CD8-positive, alpha-beta T cell (primary cell): ENCODE measurements at regions of chr15 and their contacts with region 1.

Region 1: GRCh38 chr15:40694688-40695468 is at the start of gene RAD51:
- DNase-seq: peak; percentile 82 to 96 (median 94)
- ATAC-seq: peak; percentile 94
- H3K4me3 ChIP-seq: peak within 1 kb of the TSS; percentile 84 to 94
- H3K4me3 Mint-ChIP-seq: peak within 1 kb of the TSS; percentile 99
- H3K27ac ChIP-seq: peak within 1 kb of the TSS; percentile 83 to 98
- H3K27ac Mint-ChIP-seq: peak within 1 kb of the TSS; percentile 99
- H3K4me1 ChIP-seq: peaks cover 12% of the 10 kb centered on the region
- H3K4me1 Mint-ChIP-seq: peaks cover 27% of the 10 kb centered on the region
- H3K27me3 ChIP-seq: no peaks in the 10 kb centered on the region
- H3K27me3 Mint-ChIP-seq: no peaks in the 10 kb centered on the region
- CTCF ChIP-seq: no peak
- total RNA-seq, gene RAD51: 1.3 to 1.5 TPM

Region 2: DNA sequence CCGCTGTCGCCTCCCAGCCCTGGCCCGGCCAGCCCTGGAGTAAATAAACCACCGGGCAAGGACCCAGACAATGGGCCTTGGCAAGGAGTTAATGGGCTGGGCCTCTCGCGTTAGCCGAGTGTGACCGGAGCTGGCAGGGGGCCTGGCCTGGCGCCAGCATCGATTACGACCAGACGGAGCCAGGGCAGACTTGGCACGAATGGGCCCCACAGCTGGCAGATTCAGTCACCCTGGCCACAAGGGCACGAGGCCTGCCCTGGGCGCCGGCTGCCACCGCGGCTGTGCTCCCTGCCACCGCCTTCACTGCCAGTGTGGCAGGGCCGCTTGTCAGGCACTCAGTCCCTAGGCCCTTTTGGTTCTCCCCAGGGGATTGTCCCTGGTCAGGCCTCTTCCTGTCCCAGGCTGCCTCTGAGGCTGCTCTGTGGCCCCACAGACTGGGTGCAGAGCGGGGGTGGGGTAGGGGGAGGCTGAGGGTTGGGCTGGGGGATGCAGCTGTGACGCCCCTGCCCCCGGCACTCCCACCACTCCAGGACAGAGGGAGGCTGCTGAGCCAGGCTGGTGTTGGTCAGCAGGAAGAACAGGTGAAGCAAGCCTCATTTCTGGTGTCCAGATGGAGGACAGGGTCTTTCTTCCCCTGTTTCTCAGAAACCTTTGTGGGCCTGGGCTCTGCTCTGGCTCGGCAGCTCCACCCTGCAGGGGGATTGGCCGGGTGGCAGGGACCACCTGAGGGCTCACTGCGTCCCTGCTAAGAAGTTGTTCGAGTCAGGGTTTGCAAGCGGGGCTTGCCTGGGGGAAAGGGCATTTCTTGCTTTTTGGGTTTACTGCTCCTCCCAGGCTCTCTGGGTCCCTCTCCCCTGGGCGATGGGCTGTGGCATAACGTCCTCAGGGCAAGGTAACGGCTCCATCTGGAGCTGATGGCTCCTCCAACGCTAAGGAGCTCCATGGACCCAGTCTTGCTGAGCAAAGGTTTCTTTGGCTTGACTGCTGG is 625.4 kb before region 1 on chr15:
- CTCF ChIA-PET with region 1: no interaction called
- POLR2A ChIA-PET with region 1: no interaction called
- intact Hi-C with region 1: no loop called
- DNase-seq: no peak
- ATAC-seq: no peak
- H3K4me3 ChIP-seq: no peak overlapping the region
- H3K4me3 Mint-ChIP-seq: no peak overlapping the region
- H3K27ac ChIP-seq: no peak overlapping the region
- H3K27ac Mint-ChIP-seq: no peak overlapping the region
- H3K4me1 ChIP-seq: no peaks in the 10 kb centered on the region
- H3K4me1 Mint-ChIP-seq: peaks cover 13% of the 10 kb centered on the region
- H3K27me3 ChIP-seq: no peaks in the 10 kb centered on the region
- H3K27me3 Mint-ChIP-seq: no peaks in the 10 kb centered on the region
- CTCF ChIP-seq: no peak

Region 3: DNA sequence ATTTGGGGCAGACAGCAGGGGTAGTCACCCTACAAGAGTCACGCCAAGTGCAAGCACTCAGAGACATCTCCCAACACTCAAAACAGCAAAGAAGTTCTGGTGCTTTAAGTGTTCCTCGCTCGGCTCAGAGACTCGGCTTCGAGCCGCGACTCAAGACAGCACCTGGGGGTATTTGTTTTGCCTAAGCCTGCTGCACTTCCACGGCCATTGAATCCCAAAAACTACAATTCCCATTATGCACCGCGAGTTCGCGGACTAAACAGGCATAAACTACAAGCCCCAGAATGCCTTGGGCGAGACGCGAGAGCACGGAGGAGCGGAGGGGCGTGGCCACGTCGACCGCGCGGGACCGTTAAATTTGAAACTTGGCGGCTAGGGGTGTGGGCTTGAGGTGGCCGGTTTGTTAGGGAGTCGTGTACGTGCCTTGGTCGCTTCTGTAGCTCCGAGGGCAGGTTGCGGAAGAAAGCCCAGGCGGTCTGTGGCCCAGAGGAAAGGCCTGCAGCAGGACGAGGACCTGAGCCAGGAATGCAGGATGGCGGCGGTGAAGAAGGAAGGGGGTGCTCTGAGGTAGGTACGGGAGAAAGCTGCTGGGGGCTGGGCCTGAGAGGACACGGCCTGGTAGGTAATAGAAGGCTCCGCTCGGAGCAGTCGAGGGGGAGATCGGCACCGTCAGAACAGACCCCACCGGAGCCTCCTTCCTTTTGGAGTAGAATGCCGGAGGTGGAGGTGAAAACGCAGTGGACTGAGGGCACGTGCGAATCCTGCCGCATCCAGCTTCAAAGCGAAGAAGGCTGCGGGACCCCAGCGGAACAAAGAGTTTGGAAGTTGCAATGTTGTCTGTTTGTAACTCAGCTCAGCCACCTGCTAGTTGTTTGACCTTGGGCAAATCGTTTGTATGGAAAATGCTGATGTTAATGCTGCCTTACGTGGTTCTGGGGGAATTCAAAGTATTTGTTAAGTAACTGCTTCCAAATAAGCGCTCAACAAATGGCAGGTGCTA is 533.9 kb before region 1 on chr15 and contains the start of gene BUB1B:
- CTCF ChIA-PET with region 1: no interaction called
- POLR2A ChIA-PET with region 1: no interaction called
- intact Hi-C with region 1: loop called in 1 of 2 experiments (anchors 5 kb)
- DNase-seq: peak; percentile 82 to 96 (median 91)
- ATAC-seq: peak; percentile 98
- H3K4me3 ChIP-seq: peak within 1 kb of the TSS; percentile 61 to 71
- H3K4me3 Mint-ChIP-seq: no peak within 1 kb of the TSS
- H3K27ac ChIP-seq: no peak within 1 kb of the TSS
- H3K27ac Mint-ChIP-seq: no peak within 1 kb of the TSS
- H3K4me1 ChIP-seq: peaks cover 10% of the 10 kb centered on the region
- H3K4me1 Mint-ChIP-seq: no peaks in the 10 kb centered on the region
- H3K27me3 ChIP-seq: no peaks in the 10 kb centered on the region
- H3K27me3 Mint-ChIP-seq: no peaks in the 10 kb centered on the region
- CTCF ChIP-seq: no peak
- total RNA-seq, gene BUB1B: 0.47 to 1.2 TPM

Region 4: DNA sequence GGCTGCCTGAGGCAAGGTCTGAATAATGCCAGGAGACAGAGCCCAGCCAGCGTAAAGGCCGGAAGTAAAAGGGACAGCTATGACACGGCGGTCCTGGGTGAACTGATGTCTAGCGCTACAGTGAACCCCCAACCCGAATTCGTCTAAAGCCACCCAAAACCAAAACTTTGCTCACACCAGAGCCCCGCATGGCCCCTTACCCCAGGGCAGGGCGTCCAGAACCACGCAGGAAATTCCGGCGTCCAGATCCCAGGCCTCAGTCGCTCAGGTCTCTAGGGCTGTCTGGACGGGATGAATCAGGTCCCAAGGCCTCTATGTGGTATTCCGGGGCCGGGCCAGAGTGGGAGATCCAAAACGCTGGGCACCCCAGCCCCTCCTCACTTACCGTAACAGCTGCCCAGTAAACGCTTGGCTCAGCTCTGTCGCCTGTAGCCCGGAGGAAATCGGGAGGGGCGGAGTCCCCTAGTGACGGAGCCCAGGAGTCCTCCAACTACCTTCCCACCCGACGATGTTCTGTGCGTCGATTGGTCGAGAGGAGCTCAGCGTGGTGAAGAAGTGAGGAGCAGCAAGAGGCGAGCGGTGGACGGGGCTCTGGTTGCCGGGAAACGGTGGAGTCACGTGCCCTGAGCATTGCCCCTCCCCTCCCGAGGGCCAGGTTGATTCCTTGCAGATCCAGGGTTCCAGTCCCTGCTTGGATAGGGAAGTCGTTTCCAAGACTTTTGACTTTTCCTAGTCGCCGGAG is 130.1 kb before region 1 on chr15 and contains the start of gene CCDC32:
- CTCF ChIA-PET with region 1: no interaction called
- POLR2A ChIA-PET with region 1: no interaction called
- intact Hi-C with region 1: loop called (anchors 1 to 5 kb)
- DNase-seq: peak; percentile 84 to 99 (median 94)
- ATAC-seq: peak; percentile 90
- H3K4me3 ChIP-seq: peak within 1 kb of the TSS; percentile 89 to 97
- H3K4me3 Mint-ChIP-seq: peak within 1 kb of the TSS; percentile 95
- H3K27ac ChIP-seq: peak within 1 kb of the TSS; percentile 87 to 97
- H3K27ac Mint-ChIP-seq: peak within 1 kb of the TSS; percentile 97
- H3K4me1 ChIP-seq: peaks cover 11% of the 10 kb centered on the region
- H3K4me1 Mint-ChIP-seq: peaks cover 52% of the 10 kb centered on the region
- H3K27me3 ChIP-seq: no peaks in the 10 kb centered on the region
- H3K27me3 Mint-ChIP-seq: no peaks in the 10 kb centered on the region
- CTCF ChIP-seq: no peak
- total RNA-seq, gene CCDC32: 18.3 to 20.3 TPM

Region 5: DNA sequence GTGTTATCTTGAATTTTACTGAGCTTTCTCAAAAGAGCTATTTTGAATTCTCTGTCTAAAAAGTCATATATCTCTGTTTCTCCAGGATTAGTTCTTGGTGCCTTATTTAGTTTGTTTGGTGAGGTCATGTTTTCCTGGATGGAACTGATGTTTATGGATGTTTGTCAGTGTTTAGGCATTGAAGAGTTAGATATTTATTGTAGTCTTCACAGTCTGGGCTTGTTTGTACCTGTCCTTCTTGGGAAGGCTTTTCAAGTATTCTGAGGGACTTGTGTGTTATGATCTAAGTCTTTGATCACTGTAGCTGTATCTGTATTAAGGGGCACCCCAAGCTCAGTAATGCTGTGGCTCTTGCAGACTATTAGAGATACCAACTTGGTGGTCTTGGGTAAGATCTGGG is 10.5 kb before region 1 on chr15:
- CTCF ChIA-PET with region 1: interaction called, 13 read pairs
- POLR2A ChIA-PET with region 1: no interaction called
- intact Hi-C with region 1: no loop called
- DNase-seq: no peak
- ATAC-seq: no peak
- H3K4me3 ChIP-seq: no peak overlapping the region
- H3K4me3 Mint-ChIP-seq: no peak overlapping the region
- H3K27ac ChIP-seq: no peak overlapping the region
- H3K27ac Mint-ChIP-seq: peak overlapping the region; percentile 8
- H3K4me1 ChIP-seq: no peaks in the 10 kb centered on the region
- H3K4me1 Mint-ChIP-seq: no peaks in the 10 kb centered on the region
- H3K27me3 ChIP-seq: no peaks in the 10 kb centered on the region
- H3K27me3 Mint-ChIP-seq: no peaks in the 10 kb centered on the region
- CTCF ChIP-seq: no peak

Region 6: DNA sequence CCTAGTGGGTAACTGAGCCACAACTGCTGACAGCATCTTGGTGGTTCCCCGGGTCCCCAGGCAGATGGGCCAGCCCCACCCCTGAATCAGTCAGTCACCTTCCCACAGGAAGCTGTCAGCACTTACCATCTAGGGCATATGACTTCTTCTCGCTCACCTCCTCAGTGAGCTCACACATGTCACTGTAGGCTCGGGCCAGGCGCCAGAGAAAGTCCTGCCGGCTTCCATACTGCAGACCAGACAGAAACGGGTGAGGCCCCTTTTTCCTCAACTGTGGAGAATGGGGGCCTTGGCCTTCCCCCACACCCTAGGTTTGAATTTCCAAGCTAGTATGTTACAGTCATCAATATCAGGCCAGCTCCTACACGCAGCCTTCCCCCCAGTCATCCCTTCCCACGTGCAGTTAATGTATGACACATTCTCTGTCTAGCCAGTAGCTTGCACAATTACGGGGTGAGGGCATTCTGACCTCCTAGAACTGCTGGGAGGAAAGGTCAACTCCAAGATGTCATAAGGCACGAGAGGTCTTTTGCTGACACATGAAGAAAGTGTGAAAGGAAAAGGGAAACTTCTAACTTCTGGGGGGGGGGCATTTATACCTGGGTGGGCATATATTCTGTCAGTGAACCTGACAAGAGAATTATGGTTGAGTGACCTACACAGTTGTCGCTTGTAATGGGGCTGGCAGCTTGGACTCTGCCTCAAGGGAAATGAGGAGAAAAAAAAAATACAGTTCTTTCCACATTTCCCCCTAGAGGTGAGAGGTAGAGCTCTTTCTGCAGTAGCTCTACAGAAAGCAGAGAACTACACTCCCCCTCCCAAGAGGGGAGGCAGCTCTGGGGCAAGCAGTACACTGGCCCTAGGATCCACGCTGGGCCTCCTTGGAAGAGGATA is 49.3 kb after region 1 on chr15:
- CTCF ChIA-PET with region 1: interaction called, 3 read pairs
- POLR2A ChIA-PET with region 1: interaction called, 3 read pairs
- intact Hi-C with region 1: loop called in 1 of 2 experiments (anchors 1 kb)
- DNase-seq: peak; percentile 23 to 92 (median 69)
- ATAC-seq: peak; percentile 92
- H3K4me3 ChIP-seq: peak overlapping the region in 1 of 2 experiments; percentile 5
- H3K4me3 Mint-ChIP-seq: no peak overlapping the region
- H3K27ac ChIP-seq: peak overlapping the region; percentile 29 to 95
- H3K27ac Mint-ChIP-seq: peak overlapping the region; percentile 96
- H3K4me1 ChIP-seq: peaks cover 5% of the 10 kb centered on the region
- H3K4me1 Mint-ChIP-seq: peaks cover 16% of the 10 kb centered on the region
- H3K27me3 ChIP-seq: no peaks in the 10 kb centered on the region
- H3K27me3 Mint-ChIP-seq: no peaks in the 10 kb centered on the region
- CTCF ChIP-seq: no peak

Region 7: GRCh38 chr15:40754883-40755811 is 60.3 kb after region 1 on chr15 and contains the start of gene RMDN3:
- CTCF ChIA-PET with region 1: interaction called, 3 read pairs
- POLR2A ChIA-PET with region 1: interaction called, 6 read pairs
- intact Hi-C with region 1: loop called (anchors 1 kb)
- DNase-seq: peak; percentile 84 to 96 (median 93)
- ATAC-seq: peak; percentile 95
- H3K4me3 ChIP-seq: peak within 1 kb of the TSS; percentile 99
- H3K4me3 Mint-ChIP-seq: peak within 1 kb of the TSS; percentile 94
- H3K27ac ChIP-seq: peak within 1 kb of the TSS; percentile 91 to 94
- H3K27ac Mint-ChIP-seq: peak within 1 kb of the TSS; percentile 94
- H3K4me1 ChIP-seq: peaks cover 6% of the 10 kb centered on the region
- H3K4me1 Mint-ChIP-seq: peaks cover 26% of the 10 kb centered on the region
- H3K27me3 ChIP-seq: no peaks in the 10 kb centered on the region
- H3K27me3 Mint-ChIP-seq: no peaks in the 10 kb centered on the region
- CTCF ChIP-seq: no peak
- total RNA-seq, gene RMDN3: 26.7 to 30.5 TPM

Region 8: GRCh38 chr15:40763801-40764732 is 69.2 kb after region 1 on chr15 and contains the start of gene GCHFR:
- CTCF ChIA-PET with region 1: interaction called, 5 read pairs
- POLR2A ChIA-PET with region 1: interaction called, 7 read pairs
- intact Hi-C with region 1: loop called in 1 of 2 experiments (anchors 2 kb)
- DNase-seq: peak; percentile 23 to 82 (median 64)
- ATAC-seq: peak; percentile 28
- H3K4me3 ChIP-seq: peak within 1 kb of the TSS; percentile 85 to 91
- H3K4me3 Mint-ChIP-seq: peak within 1 kb of the TSS; percentile 89
- H3K27ac ChIP-seq: peak within 1 kb of the TSS; percentile 51 to 73
- H3K27ac Mint-ChIP-seq: peak within 1 kb of the TSS; percentile 91
- H3K4me1 ChIP-seq: peaks cover 39% of the 10 kb centered on the region
- H3K4me1 Mint-ChIP-seq: peaks cover 39% of the 10 kb centered on the region
- H3K27me3 ChIP-seq: no peaks in the 10 kb centered on the region
- H3K27me3 Mint-ChIP-seq: no peaks in the 10 kb centered on the region
- CTCF ChIP-seq: no peak
- total RNA-seq, gene GCHFR: 17.2 to 17.3 TPM

Region 9: DNA sequence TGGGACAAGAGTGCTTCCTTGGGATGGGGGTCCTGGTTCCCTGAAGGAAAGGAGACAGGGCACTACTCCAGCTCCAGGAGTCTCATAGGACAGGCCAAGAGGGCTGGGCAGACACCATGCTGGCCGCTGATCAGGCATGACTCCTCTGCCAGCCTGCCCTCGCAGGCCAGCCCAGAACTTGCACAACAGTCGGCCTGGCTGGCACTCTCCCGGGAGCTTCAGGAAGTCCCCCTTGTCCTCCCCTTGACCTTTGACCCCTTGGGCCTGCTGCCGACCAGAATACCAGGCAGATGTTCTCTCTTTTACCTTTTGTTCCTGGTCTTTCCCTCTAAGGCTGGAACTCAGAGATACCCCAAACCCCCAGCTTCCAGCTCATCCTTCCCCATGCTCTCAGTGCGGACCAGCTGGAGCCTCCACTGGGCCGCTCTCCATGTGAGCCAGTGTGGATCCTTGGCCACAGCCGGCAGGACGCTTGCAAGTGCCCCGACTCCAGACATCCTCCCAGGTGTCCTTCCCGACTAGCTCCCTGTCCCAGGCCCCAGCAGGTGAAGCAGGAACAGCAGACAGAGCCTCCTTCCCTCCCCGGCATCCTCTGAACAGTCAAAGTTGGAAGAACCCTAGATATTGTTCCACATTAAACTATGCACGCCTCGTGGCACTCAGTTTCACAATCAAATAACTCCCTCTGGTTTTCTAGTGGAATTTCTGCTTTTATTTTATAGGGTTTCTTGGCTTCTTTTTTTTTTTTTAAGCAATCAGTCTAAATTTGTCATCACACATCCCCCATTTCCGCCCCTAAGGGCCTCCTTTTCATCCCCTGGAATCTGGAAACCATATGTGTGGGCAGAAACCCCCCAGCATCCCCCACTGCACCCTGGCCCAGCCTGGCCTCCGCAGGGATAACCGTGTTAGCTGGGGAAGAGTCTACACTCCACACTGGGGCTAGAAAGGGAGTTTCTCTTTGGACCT is 215.1 kb after region 1 on chr15:
- CTCF ChIA-PET with region 1: no interaction called
- POLR2A ChIA-PET with region 1: no interaction called
- intact Hi-C with region 1: no loop called
- DNase-seq: no peak
- ATAC-seq: no peak
- H3K4me3 ChIP-seq: no peak overlapping the region
- H3K4me3 Mint-ChIP-seq: no peak overlapping the region
- H3K27ac ChIP-seq: no peak overlapping the region
- H3K27ac Mint-ChIP-seq: peak overlapping the region; percentile 67
- H3K4me1 ChIP-seq: peaks cover 18% of the 10 kb centered on the region
- H3K4me1 Mint-ChIP-seq: peaks cover 17% of the 10 kb centered on the region
- H3K27me3 ChIP-seq: no peaks in the 10 kb centered on the region
- H3K27me3 Mint-ChIP-seq: no peaks in the 10 kb centered on the region
- CTCF ChIP-seq: no peak

Region 10: GRCh38 chr15:41161336-41161735 is 466.5 kb after region 1 on chr15:
- CTCF ChIA-PET with region 1: no interaction called
- POLR2A ChIA-PET with region 1: no interaction called
- intact Hi-C with region 1: no loop called
- DNase-seq: no peak
- ATAC-seq: no peak
- H3K4me3 ChIP-seq: no peak overlapping the region
- H3K4me3 Mint-ChIP-seq: no peak overlapping the region
- H3K27ac ChIP-seq: no peak overlapping the region
- H3K27ac Mint-ChIP-seq: no peak overlapping the region
- H3K4me1 ChIP-seq: no peaks in the 10 kb centered on the region
- H3K4me1 Mint-ChIP-seq: peaks cover 4% of the 10 kb centered on the region
- H3K27me3 ChIP-seq: no peaks in the 10 kb centered on the region
- H3K27me3 Mint-ChIP-seq: peaks cover 4% of the 10 kb centered on the region
- CTCF ChIP-seq: no peak